ENCODE measurements at regions of chr2 and their contacts with region 1.

Region 1: GRCh38 chr2:12479065-12479601 is 237.6 kb upstream of the TRIB2 start:
- DNase-seq: no peak
- ATAC-seq: no peak
- H3K4me3 ChIP-seq: no peak overlapping the region
- H3K4me3 Mint-ChIP-seq: no peak overlapping the region
- H3K27ac ChIP-seq: no peak overlapping the region
- H3K27ac Mint-ChIP-seq: no peak overlapping the region
- H3K4me1 ChIP-seq: no peaks in the 10 kb centered on the region
- H3K4me1 Mint-ChIP-seq: peaks cover 3% of the 10 kb centered on the region
- H3K27me3 ChIP-seq: no peaks in the 10 kb centered on the region
- H3K27me3 Mint-ChIP-seq: no peaks in the 10 kb centered on the region
- CTCF ChIP-seq: no peak

Region 2: GRCh38 chr2:12303181-12304030 is 175.7 kb before region 1 on chr2:
- CTCF ChIA-PET with region 1: no interaction called
- POLR2A ChIA-PET with region 1: no interaction called
- intact Hi-C with region 1: no loop called
- DNase-seq: peak in 4 of 9 experiments; percentile 11 to 45 (median 26)
- ATAC-seq: peak; percentile 57
- H3K4me3 ChIP-seq: no peak overlapping the region
- H3K4me3 Mint-ChIP-seq: peak overlapping the region; percentile 27
- H3K27ac ChIP-seq: no peak overlapping the region
- H3K27ac Mint-ChIP-seq: peak overlapping the region; percentile 75
- H3K4me1 ChIP-seq: peaks cover 30% of the 10 kb centered on the region
- H3K4me1 Mint-ChIP-seq: peaks cover 39% of the 10 kb centered on the region
- H3K27me3 ChIP-seq: no peaks in the 10 kb centered on the region
- H3K27me3 Mint-ChIP-seq: no peaks in the 10 kb centered on the region
- CTCF ChIP-seq: no peak

Region 3: DNA sequence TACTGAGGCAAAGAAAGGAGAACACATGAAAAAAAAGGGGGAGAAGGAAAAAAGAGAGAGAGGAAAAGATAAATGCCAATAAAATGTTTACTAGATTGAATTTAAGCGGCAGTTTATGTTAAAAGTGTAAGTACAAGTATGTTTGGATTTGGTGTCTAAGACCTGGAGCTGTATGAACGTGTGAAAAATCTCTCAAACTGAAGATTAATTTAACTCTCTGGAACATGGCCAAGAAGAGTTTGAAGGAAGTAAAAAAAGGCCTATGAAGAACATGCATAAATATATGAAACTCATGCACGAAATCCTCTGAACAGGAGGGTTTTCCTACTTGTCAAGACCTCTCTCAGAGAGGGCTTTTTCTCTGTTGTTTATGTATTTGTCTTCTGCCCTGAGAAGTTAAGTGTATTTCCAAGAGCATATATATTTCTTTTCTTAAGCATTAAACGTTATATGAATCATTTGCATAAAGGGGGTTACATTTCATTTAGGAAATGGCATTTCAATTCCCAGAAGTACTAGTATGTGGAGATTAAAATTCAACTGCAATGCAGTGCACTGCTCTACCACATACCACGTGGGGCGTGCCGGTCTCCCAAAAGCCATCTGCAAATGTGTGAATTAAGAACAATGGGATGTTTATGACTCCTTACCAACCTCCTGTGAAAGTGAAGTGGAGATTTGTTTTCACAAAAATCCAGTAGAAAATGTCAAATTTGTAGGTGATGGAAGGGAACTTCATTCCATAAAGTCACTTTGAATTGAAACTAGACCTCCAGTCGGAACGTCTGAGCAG is 43.5 kb before region 1 on chr2:
- CTCF ChIA-PET with region 1: interaction called, 3 read pairs
- POLR2A ChIA-PET with region 1: no interaction called
- intact Hi-C with region 1: loop called in 1 of 2 experiments (anchors 5 kb)
- DNase-seq: no peak
- ATAC-seq: no peak
- H3K4me3 ChIP-seq: no peak overlapping the region
- H3K4me3 Mint-ChIP-seq: no peak overlapping the region
- H3K27ac ChIP-seq: no peak overlapping the region
- H3K27ac Mint-ChIP-seq: no peak overlapping the region
- H3K4me1 ChIP-seq: no peaks in the 10 kb centered on the region
- H3K4me1 Mint-ChIP-seq: peaks cover 28% of the 10 kb centered on the region
- H3K27me3 ChIP-seq: no peaks in the 10 kb centered on the region
- H3K27me3 Mint-ChIP-seq: no peaks in the 10 kb centered on the region
- CTCF ChIP-seq: no peak

Measured in CD8-positive, alpha-beta T cell (primary cell).